Activated B cell treated with CpG ODN at 0.5 μM for 24 hours (primary cell): ENCODE measurements at regions of chr16 and their contacts with region 1.

Region 1: GRCh38 chr16:22217889-22218730 is 12.0 kb downstream of the EEF2K start:
- DNase-seq: peak; percentile 29
- ATAC-seq: peak; percentile 86
- H3K4me3 Mint-ChIP-seq: peak overlapping the region; percentile 52
- H3K27ac Mint-ChIP-seq: peak overlapping the region; percentile 85
- H3K4me1 Mint-ChIP-seq: peaks cover 26% of the 10 kb centered on the region
- H3K27me3 Mint-ChIP-seq: no peaks in the 10 kb centered on the region
- CTCF ChIP-seq: no peak

Region 2: GRCh38 chr16:22240023-22240710 is 22.1 kb after region 1 on chr16:
- CTCF ChIA-PET with region 1: interaction called, 3 read pairs
- POLR2A ChIA-PET with region 1: no interaction called
- intact Hi-C with region 1: loop called (anchors 1 kb)
- DNase-seq: no peak
- ATAC-seq: no peak
- H3K4me3 Mint-ChIP-seq: no peak overlapping the region
- H3K27ac Mint-ChIP-seq: no peak overlapping the region
- H3K4me1 Mint-ChIP-seq: peaks cover 20% of the 10 kb centered on the region
- H3K27me3 Mint-ChIP-seq: no peaks in the 10 kb centered on the region
- CTCF ChIP-seq: no peak

Region 3: GRCh38 chr16:22262460-22262859 is 44.4 kb after region 1 on chr16:
- CTCF ChIA-PET with region 1: no interaction called
- POLR2A ChIA-PET with region 1: no interaction called
- intact Hi-C with region 1: no loop called
- DNase-seq: no peak
- ATAC-seq: no peak
- H3K4me3 Mint-ChIP-seq: no peak overlapping the region
- H3K27ac Mint-ChIP-seq: no peak overlapping the region
- H3K4me1 Mint-ChIP-seq: no peaks in the 10 kb centered on the region
- H3K27me3 Mint-ChIP-seq: no peaks in the 10 kb centered on the region
- CTCF ChIP-seq: no peak

Region 4: DNA sequence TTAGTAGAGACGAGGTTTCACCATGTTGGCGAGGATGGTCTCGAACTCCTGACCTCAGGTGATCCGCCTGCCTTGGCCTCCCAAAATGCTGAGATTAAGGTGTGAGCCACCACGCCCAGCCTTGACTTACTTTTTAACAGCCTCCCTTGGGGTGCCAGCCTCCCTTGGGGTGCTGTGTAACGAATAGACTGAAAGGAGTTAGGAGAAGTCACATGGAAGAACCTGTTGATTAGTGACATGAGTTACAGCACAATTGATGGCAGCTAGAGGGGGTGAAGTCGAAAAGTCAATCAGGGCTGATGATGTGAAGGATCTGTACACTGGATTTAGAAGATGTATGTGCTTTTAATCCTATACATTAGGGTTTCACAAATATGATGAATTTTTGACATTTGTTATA is 195.7 kb after region 1 on chr16:
- CTCF ChIA-PET with region 1: no interaction called
- POLR2A ChIA-PET with region 1: no interaction called
- intact Hi-C with region 1: no loop called
- DNase-seq: no peak
- ATAC-seq: no peak
- H3K4me3 Mint-ChIP-seq: no peak overlapping the region
- H3K27ac Mint-ChIP-seq: no peak overlapping the region
- H3K4me1 Mint-ChIP-seq: no peaks in the 10 kb centered on the region
- H3K27me3 Mint-ChIP-seq: no peaks in the 10 kb centered on the region
- CTCF ChIP-seq: no peak